ENCODE measurements at regions of chr9 and their contacts with region 1.

Region 1: DNA sequence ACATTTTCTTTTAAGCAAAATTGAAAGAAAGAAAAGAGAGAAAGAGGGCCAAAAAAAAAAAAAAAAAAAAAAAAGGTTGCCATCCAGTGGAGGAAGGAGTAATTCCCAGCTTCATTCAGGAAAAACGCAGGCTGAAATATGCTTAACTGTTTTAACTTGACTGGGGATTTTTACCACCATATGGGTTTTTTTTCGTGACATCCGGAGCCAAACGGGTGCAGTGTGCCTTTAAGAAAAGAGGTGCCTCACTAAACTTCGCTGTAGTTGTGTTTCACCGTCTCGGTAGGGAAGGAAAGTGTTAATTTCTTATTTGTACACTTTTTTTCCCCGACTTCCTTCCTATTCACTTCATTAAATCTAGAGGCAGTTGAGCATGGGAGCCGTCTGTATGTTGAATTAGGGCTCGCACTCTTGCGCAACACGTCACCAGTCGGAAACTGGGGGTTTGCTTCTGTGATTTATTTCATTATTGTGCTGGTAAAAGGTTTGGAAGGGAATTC is 143.0 kb downstream of the SMARCA2 start:
- DNase-seq: no peak
- H3K4me3 ChIP-seq: peak overlapping the region; percentile 58 to 66
- H3K27ac ChIP-seq: peak overlapping the region; percentile 74 to 79
- H3K4me1 ChIP-seq: peaks cover 0 to 13% of the 10 kb centered on the region in 2 donors
- H3K27me3 ChIP-seq: no peaks in the 10 kb centered on the region
- CTCF ChIP-seq: no peak

Region 2: GRCh38 chr9:1470001-1470804 is 688.0 kb before region 1 on chr9:
- intact Hi-C with region 1: no loop called
- DNase-seq: no peak
- H3K4me3 ChIP-seq: no peak overlapping the region
- H3K27ac ChIP-seq: no peak overlapping the region
- H3K4me1 ChIP-seq: no peaks in the 10 kb centered on the region
- H3K27me3 ChIP-seq: no peaks in the 10 kb centered on the region
- CTCF ChIP-seq: no peak

Region 3: DNA sequence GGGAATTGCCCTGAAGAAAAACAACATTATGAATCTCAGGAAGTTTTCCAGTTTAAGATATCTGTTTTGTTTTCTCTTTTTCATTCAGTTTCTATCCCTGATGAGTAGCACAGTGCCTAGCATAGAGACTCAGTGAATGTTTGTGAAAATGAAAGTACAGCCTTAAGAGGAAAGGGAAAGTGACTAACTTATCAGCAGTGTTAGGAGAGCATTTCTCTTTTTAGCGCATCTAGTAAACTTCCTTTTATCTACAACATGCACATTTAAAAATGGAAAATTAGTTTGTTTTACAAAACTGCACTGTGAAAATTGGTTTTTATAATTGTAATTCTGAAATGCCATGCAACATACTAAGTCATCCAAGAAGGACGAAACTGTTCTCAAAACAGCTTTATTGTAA is 32.3 kb before region 1 on chr9:
- intact Hi-C with region 1: loop called (anchors 5 kb)
- DNase-seq: no peak
- H3K4me3 ChIP-seq: peak overlapping the region; percentile 36 to 37
- H3K27ac ChIP-seq: peak overlapping the region; percentile 85 to 89
- H3K4me1 ChIP-seq: peaks cover 7 to 73% of the 10 kb centered on the region in 2 donors
- H3K27me3 ChIP-seq: no peaks in the 10 kb centered on the region
- CTCF ChIP-seq: no peak

Region 4: GRCh38 chr9:2132484-2133082 is 25.6 kb before region 1 on chr9:
- intact Hi-C with region 1: loop called (anchors 2 kb)
- DNase-seq: no peak
- H3K4me3 ChIP-seq: no peak overlapping the region
- H3K27ac ChIP-seq: no peak overlapping the region
- H3K4me1 ChIP-seq: peaks cover 0 to 30% of the 10 kb centered on the region in 2 donors
- H3K27me3 ChIP-seq: no peaks in the 10 kb centered on the region
- CTCF ChIP-seq: peak; percentile 41 to 81 (median 69)

Region 5: DNA sequence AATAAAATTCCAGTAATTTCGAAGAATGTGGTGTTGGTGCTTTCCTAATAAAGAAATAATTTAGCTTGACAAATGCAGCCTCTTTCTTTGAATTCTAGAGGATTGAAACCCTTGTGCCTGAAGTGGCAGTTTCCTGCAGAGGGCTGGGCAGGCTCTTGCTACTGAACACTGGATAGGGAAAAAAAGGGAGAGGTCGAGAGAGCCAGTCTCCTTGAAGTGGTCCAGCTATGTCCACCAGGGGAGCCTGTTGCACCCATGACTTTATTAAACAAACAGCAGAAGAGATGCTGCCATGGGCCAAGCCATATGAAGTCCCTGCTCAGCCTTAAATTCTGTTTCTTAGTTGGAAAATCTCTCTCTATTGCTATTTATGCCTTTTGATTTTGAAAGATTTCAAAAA is 35.4 kb after region 1 on chr9:
- intact Hi-C with region 1: no loop called
- DNase-seq: no peak
- H3K4me3 ChIP-seq: no peak overlapping the region
- H3K27ac ChIP-seq: no peak overlapping the region
- H3K4me1 ChIP-seq: no peaks in the 10 kb centered on the region
- H3K27me3 ChIP-seq: no peaks in the 10 kb centered on the region
- CTCF ChIP-seq: no peak

Region 6: GRCh38 chr9:2241836-2242741 is 83.9 kb after region 1 on chr9:
- intact Hi-C with region 1: loop called (anchors 5 kb)
- DNase-seq: peak; percentile 23 to 84
- H3K4me3 ChIP-seq: peak overlapping the region; percentile 52 to 66
- H3K27ac ChIP-seq: no peak overlapping the region
- H3K4me1 ChIP-seq: peaks cover 3% of the 10 kb centered on the region in 2 donors
- H3K27me3 ChIP-seq: no peaks in the 10 kb centered on the region
- CTCF ChIP-seq: peak in 1 of 3 experiments; percentile 6

Region 7: GRCh38 chr9:2291980-2292665 is 134.0 kb after region 1 on chr9:
- intact Hi-C with region 1: no loop called
- DNase-seq: no peak
- H3K4me3 ChIP-seq: no peak overlapping the region
- H3K27ac ChIP-seq: no peak overlapping the region
- H3K4me1 ChIP-seq: no peaks in the 10 kb centered on the region
- H3K27me3 ChIP-seq: no peaks in the 10 kb centered on the region
- CTCF ChIP-seq: no peak